ENCODE measurements at regions of chr3 and their contacts with region 1.

Region 1: DNA sequence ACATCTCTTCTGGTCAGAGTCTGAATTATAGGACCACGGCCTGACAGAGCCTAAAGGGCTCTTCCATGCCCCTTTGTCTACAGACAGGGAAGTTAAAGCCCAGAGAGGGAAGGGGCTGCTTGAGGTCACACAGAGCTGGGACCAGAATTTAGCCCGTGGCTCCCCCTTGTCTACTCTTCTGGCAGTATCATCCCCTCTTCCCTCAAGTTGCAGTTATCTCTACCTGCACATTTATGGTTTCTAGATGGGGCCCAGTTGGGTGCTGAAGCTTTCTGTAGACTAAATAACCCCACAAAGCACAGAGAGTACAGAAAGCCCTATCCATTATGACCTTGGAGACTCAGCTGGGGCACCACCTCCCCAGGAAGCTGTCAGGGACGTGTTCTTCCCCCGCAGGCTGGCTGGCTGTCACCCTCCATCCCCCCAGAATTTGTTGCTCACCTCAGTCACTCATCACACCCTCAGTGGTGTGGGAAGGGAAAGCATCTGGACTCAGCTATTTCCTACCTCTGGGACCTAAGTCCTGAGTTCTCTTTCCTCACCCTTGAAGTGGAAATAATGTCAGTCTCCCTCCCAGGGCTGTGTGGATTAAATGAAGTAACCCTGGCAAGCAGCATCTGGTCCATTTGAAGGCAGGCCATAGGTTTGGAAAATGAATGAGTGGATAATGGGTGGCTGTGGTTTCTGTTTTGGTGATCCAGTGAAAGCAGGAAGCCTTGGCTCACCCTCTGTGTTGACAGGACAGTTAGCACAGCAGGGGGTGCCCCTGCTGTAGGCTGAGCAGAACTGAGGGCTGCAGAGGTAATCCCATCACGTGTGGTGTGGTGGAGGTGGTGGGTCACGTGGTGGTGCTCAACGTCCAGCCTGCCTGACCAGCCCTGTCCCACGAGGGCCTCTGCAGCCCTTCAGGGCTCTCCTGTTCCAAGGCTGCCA is 16.3 kb downstream of the ACOX2 start:
- H3K4me3 ChIP-seq: no peak overlapping the region
- H3K27ac ChIP-seq: no peak overlapping the region
- H3K4me1 ChIP-seq: no peaks in the 10 kb centered on the region
- CTCF ChIP-seq: no peak

Region 2: GRCh38 chr3:58502872-58503271 is 17.8 kb before region 1 on chr3:
- CTCF ChIA-PET with region 1: no interaction called
- POLR2A ChIA-PET with region 1: interaction called, 15 read pairs
- H3K4me3 ChIP-seq: no peak overlapping the region
- H3K27ac ChIP-seq: no peak overlapping the region
- H3K4me1 ChIP-seq: no peaks in the 10 kb centered on the region
- CTCF ChIP-seq: no peak

Region 3: GRCh38 chr3:58532794-58533220 is 12.1 kb after region 1 on chr3:
- CTCF ChIA-PET with region 1: interaction called, 14 read pairs
- POLR2A ChIA-PET with region 1: no interaction called
- H3K4me3 ChIP-seq: no peak overlapping the region
- H3K27ac ChIP-seq: no peak overlapping the region
- H3K4me1 ChIP-seq: no peaks in the 10 kb centered on the region
- CTCF ChIP-seq: peak; percentile 74